MCF 10A (cell line): ENCODE measurements at regions of chr13 and their contacts with region 1.

Region 1: DNA sequence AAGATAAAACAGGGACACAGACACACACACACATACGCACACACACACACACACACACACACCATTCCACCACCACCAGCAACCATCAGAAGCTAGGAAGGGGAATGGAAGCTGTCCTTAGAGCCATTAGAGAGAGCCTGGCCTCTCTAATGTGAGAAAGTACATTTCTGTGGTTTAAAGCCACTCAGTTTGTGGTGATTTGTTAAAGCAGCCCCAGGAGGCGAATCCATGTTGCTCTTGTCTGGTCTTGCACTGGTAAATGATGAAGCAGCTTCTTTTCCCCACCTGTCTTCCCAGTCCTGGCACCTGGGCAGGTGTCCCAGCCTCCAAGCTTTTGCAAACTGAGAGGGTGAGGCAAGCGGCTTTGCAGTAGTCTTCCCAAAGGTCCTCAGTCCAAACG is 118.9 kb upstream of the KL start:
- DNase-seq: peak; percentile 63
- H3K4me3 Mint-ChIP-seq: no peak overlapping the region
- H3K27ac Mint-ChIP-seq: no peak overlapping the region
- H3K4me1 Mint-ChIP-seq: peaks cover 58% of the 10 kb centered on the region
- H3K27me3 Mint-ChIP-seq: no peaks in the 10 kb centered on the region
- CTCF ChIP-seq: no peak

Region 2: GRCh38 chr13:32737111-32737571 is 160.2 kb before region 1 on chr13:
- CTCF ChIA-PET with region 1: no interaction called
- POLR2A ChIA-PET with region 1: no interaction called
- intact Hi-C with region 1: no loop called
- DNase-seq: no peak
- H3K4me3 Mint-ChIP-seq: peak overlapping the region; percentile 42
- H3K27ac Mint-ChIP-seq: peak overlapping the region; percentile 63
- H3K4me1 Mint-ChIP-seq: peaks cover 32% of the 10 kb centered on the region
- H3K27me3 Mint-ChIP-seq: no peaks in the 10 kb centered on the region
- CTCF ChIP-seq: no peak

Region 3: GRCh38 chr13:32840989-32841713 is 56.1 kb before region 1 on chr13:
- CTCF ChIA-PET with region 1: no interaction called
- POLR2A ChIA-PET with region 1: no interaction called
- intact Hi-C with region 1: no loop called
- DNase-seq: peak; percentile 35
- H3K4me3 Mint-ChIP-seq: no peak overlapping the region
- H3K27ac Mint-ChIP-seq: no peak overlapping the region
- H3K4me1 Mint-ChIP-seq: no peaks in the 10 kb centered on the region
- H3K27me3 Mint-ChIP-seq: no peaks in the 10 kb centered on the region
- CTCF ChIP-seq: no peak

Region 4: DNA sequence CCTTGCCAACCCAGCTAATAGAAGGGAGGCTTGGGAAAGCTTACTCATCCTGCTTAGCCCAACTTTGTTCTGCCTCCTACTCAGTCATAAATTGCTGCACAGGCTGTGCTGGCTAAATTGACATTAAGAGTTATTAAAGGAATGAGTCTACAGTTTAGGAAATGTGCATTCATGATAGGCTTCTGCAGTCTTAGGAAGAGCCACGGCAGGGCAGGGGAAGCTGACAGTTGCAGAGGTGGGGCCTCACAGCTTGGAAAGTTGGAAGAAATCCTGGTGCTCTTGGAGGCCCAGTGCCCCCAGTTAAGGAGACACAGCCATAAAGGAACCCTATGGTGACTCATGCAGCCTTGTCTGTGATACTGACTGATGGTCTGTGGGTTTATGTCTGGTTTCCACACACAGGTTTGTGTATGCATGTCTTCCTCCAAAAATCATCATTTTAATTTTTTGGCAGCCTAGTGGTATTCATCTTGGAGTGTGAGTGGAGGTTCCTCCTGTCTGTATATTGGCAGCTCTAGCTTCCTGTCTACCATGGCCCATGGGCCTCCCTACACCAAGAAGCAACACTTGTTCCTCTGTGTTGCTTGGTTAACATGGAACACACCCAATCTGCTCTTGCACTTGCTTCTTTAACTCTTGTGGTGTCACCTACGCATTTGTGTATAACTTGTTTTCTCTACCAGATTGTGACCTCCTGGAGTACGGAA is 16.1 kb before region 1 on chr13:
- CTCF ChIA-PET with region 1: interaction called, 6 read pairs
- POLR2A ChIA-PET with region 1: interaction called, 10 read pairs
- intact Hi-C with region 1: no loop called
- DNase-seq: peak; percentile 56
- H3K4me3 Mint-ChIP-seq: peak overlapping the region; percentile 14
- H3K27ac Mint-ChIP-seq: peak overlapping the region; percentile 79
- H3K4me1 Mint-ChIP-seq: peaks cover 28% of the 10 kb centered on the region
- H3K27me3 Mint-ChIP-seq: no peaks in the 10 kb centered on the region
- CTCF ChIP-seq: no peak

Region 5: GRCh38 chr13:32976047-32976805 is 78.9 kb after region 1 on chr13:
- CTCF ChIA-PET with region 1: no interaction called
- POLR2A ChIA-PET with region 1: no interaction called
- intact Hi-C with region 1: no loop called
- DNase-seq: no peak
- H3K4me3 Mint-ChIP-seq: no peak overlapping the region
- H3K27ac Mint-ChIP-seq: no peak overlapping the region
- H3K4me1 Mint-ChIP-seq: no peaks in the 10 kb centered on the region
- H3K27me3 Mint-ChIP-seq: no peaks in the 10 kb centered on the region
- CTCF ChIP-seq: no peak